Cardiac septum (tissue), 1 donor: ENCODE measurements at regions of chr11 and their contacts with region 1.

Region 1: DNA sequence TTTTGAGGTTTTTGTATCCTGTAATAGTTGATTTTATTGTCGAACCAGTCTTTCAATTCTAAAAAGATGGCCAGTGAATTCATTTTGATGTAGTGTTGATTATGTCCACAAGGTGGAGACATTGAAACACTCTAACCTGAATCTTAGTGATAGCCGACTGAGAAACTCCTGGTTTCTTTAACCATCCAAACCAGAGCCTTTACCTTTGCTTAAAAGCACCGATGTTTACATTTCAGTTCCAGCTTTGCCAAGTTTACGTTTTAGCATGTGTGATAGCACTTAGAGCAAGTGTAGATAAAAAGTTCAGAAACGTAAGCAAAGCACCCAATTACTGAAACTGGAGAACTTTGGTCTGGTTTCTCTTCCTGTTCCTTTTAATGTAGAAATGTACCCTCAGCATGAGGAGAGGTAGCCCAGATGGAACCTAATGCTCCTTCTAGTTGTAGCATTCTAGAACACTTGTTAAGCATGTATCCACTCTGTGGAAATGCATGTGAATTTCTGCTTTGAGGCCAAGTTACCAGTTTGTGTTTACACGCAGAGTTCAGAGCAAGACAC is 208.6 kb downstream of the DBX1 start:
- DNase-seq: no peak

Region 2: GRCh38 chr11:20025332-20025840 is 73.7 kb after region 1 on chr11:
- intact Hi-C with region 1: no loop called
- DNase-seq: peak; percentile 26

Region 3: GRCh38 chr11:20035701-20036620 is 84.3 kb after region 1 on chr11:
- intact Hi-C with region 1: loop called (anchors 5 kb)
- DNase-seq: no peak

Region 4: GRCh38 chr11:20080032-20080685 is 128.5 kb after region 1 on chr11:
- intact Hi-C with region 1: no loop called
- DNase-seq: no peak

Region 5: DNA sequence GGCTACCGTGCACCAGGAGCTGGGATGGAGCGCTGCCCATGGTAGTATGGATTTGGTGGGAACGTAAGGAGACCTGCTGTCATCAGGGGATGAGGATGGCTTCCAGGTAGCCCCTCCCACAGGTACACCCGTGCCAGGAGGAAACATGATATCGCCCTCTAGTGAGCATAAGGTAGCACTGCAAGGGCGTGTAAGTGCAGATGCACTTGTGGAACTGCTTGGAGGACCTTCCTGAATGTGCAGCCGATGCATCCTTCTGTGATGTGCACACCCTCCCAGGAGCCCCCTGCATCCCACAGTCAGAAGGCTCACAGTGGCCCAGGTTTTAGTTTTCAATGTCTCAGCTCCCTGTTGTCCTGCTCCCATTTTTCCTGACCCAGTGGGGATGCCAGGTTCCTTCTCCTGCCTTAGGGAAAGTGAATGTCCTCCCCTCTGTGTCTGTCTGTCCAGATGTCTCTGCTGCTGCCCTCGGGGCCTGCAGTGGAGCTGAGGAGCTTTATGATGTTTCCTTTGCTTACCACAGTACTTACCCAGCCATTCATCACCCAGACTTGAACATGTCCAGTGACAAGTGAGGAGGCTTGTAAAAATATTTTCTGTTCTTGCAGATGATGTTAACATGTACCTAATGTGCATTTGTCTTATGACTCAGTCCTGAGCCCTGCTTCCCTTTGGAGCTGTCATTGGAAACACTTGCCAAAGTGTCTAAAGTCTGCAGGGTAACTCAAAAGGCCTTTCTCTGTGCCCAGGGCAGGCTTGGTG is 159.5 kb after region 1 on chr11:
- intact Hi-C with region 1: loop called (anchors 5 kb)
- DNase-seq: no peak

Region 6: GRCh38 chr11:20127671-20128527 is 176.3 kb after region 1 on chr11:
- intact Hi-C with region 1: loop called (anchors 1 kb)
- DNase-seq: no peak